Right ventricle myocardium inferior (tissue), 1 donor: ENCODE measurements at regions of chr15 and their contacts with region 1.

Region 1: DNA sequence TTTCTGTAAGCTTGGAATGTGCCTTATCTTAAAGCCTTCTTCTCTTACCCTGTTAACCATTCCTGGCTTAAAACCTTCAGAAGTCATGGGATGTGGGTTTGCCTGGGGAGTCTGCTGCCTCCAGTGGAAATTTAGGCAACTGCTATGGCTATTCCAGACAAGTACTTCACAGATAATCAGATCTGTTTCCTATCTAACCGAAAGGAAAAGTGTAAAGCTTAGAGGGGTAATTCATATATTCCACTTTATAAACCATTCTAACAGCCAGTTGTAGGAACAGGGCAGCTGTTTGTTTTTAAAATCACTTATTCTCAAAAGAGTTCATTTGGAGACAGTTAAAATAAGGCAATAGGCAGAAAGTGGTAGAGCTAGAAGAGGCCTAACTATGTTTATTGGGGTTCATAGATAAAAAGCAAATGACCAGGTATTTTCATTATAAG is 219.9 kb downstream of the TCF12 start:
- DNase-seq: no peak
- ATAC-seq: peak; percentile 79

Region 2: GRCh38 chr15:56886932-56887781 is 251.2 kb before region 1 on chr15:
- intact Hi-C with region 1: loop called (anchors 10 kb)
- DNase-seq: peak; percentile 97
- ATAC-seq: peak; percentile 98

Region 3: DNA sequence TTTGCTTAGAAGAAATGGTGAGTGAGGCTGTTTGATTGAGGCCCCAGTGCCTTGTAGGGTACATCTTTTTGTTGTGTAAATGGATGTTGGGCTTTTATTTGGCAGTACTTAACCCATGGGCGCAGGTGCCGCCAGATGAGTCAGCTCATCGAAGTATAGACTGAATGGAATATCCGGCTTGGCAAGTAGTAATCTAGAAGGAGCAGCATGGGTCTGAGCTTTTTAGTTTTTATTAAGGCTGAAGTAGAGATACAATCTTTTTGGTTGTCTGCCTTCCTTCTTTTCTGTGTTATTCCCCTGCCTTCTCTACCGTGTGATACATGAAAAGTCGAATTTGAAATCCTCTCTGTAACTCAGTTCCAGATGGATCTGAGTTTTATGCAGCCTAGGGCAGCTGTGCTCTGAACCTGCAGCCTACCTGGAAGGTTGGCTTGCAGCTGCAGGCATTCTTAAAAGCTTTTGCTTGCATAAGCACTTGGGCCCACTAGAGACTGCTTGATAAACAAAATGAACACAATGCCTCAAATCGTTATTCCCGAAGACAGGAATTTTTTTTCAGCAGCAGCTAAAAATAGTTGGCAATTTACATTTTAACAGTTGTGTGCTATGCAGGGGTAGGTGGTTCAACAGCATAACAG is 60.4 kb after region 1 on chr15:
- intact Hi-C with region 1: no loop called
- DNase-seq: no peak
- ATAC-seq: no peak

Region 4: GRCh38 chr15:57635300-57635909 is 497.0 kb after region 1 on chr15:
- intact Hi-C with region 1: no loop called
- DNase-seq: no peak
- ATAC-seq: peak; percentile 85